Activated T-helper 1 cell treated with anti-CD3 and anti-CD28 coated beads, Interleukin-12 subunit alpha, Interleukin-12 subunit beta, Interleukin-2, Interleukin-4 antibody, amounts not matched to agents 30 ng/mL and 10 ng/mL and 1 ng/mL, durations not matched to agents 14 hours and 24 hours and 36 hours (primary cell): ENCODE measurements at regions of chr20 and their contacts with region 1.

Region 1: DNA sequence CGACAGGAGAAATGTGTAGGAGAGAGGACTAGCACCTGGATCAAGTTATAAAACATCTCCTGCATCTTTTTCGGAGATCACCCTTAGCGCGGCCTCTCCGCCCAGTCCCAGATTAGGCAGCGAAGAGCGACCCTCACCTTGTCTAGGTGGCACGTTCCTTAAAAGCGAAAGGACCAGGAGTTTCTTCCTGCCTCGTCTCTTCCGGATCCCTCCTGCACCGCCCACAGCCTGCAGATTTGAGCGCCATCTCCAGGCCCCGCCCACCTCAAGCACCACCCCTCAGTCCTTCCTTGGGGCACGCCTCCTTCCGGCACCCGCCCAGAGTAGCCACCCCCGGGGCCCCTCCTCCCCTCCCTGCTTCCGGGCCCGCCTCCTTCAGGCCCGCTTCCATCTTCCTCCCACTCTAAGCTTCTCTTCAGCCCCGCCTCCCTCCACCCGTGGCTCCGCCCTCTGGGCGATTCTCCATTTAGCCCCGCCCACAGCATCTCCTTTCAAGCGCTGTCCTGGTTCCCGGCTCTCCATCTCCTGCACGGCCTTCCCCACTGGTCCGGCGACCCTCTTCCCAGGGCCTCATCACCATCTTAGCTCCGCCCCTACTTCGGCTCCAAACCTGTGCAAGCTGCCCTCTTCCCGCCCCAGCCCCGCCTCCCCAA is 662 bp upstream of the RALY start:
- DNase-seq: peak; percentile 99
- H3K4me3 Mint-ChIP-seq: peak overlapping the region; percentile 88
- H3K27ac Mint-ChIP-seq: peak overlapping the region; percentile 97
- H3K4me1 Mint-ChIP-seq: peaks cover 58% of the 10 kb centered on the region
- H3K27me3 Mint-ChIP-seq: peaks cover 2% of the 10 kb centered on the region

Region 2: GRCh38 chr20:32207626-32208498 is 1785.2 kb before region 1 on chr20 and contains the starts of genes PLAGL2 and POFUT1:
- intact Hi-C with region 1: loop called (anchors 10 kb)
- DNase-seq: peak; percentile 90
- H3K4me3 Mint-ChIP-seq: peak within 1 kb of the TSS; percentile 100
- H3K27ac Mint-ChIP-seq: peak within 1 kb of the TSS; percentile 93
- H3K4me1 Mint-ChIP-seq: peaks cover 81% of the 10 kb centered on the region
- H3K27me3 Mint-ChIP-seq: no peaks in the 10 kb centered on the region
- total RNA-seq, gene PLAGL2: 123 and 126 TPM in 2 replicates
- total RNA-seq, gene POFUT1: 69.0 and 73.0 TPM in 2 replicates

Region 3: DNA sequence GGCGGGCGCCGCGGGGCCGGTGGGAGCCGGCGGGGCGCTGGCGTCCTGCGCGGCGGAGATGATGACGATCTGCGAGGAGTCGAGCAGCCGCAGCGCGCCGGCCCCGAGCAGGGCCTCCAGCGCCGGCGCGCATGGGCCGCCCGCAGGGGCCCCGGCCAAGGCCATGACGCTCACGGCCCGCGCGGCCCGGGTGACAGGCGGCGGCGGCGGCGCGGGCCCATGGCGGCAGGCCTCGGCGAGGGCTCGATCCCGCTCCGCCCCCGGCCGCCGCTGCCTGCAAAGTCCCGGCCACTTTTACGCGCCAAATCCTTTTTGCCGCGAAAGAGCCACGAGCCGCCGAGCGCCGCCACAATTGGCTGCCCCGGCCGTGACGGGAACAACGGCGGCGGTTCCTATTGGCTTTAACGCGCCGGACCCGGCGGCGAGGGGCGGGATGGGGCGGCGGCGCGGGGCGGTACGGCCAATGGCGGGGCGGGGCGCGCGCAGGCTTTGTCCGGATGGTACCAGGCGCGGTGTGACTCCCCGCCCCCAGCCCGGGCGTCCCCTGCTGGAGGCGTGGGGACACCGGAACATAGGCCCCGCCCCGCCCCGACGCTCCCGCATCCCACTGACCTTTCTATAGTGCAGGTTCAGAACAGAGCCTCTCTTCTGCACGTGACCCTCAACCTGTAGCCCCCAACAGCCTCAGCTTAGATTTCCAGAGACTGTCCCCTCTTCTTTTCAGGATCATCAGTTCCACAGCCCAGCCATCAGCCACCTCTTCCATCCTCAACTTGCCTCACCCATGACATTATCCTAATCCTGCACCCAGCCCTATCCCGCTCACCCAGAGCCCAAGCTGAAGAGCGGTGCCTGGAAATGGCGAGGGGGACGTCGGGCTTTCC is 306.7 kb before region 1 on chr20 and contains the start of gene E2F1:
- intact Hi-C with region 1: loop called (anchors 5 kb)
- DNase-seq: peak; percentile 97
- H3K4me3 Mint-ChIP-seq: peak within 1 kb of the TSS; percentile 92
- H3K27ac Mint-ChIP-seq: peak within 1 kb of the TSS; percentile 89
- H3K4me1 Mint-ChIP-seq: peaks cover 71% of the 10 kb centered on the region
- H3K27me3 Mint-ChIP-seq: no peaks in the 10 kb centered on the region
- total RNA-seq, gene E2F1: 77.5 and 80.6 TPM in 2 replicates

Region 4: GRCh38 chr20:34037121-34037520 is 44.1 kb after region 1 on chr20:
- intact Hi-C with region 1: loop called (anchors 1 kb)
- DNase-seq: peak; percentile 8
- H3K4me3 Mint-ChIP-seq: peak overlapping the region; percentile 63
- H3K27ac Mint-ChIP-seq: peak overlapping the region; percentile 64
- H3K4me1 Mint-ChIP-seq: peaks cover 27% of the 10 kb centered on the region
- H3K27me3 Mint-ChIP-seq: no peaks in the 10 kb centered on the region

Region 5: DNA sequence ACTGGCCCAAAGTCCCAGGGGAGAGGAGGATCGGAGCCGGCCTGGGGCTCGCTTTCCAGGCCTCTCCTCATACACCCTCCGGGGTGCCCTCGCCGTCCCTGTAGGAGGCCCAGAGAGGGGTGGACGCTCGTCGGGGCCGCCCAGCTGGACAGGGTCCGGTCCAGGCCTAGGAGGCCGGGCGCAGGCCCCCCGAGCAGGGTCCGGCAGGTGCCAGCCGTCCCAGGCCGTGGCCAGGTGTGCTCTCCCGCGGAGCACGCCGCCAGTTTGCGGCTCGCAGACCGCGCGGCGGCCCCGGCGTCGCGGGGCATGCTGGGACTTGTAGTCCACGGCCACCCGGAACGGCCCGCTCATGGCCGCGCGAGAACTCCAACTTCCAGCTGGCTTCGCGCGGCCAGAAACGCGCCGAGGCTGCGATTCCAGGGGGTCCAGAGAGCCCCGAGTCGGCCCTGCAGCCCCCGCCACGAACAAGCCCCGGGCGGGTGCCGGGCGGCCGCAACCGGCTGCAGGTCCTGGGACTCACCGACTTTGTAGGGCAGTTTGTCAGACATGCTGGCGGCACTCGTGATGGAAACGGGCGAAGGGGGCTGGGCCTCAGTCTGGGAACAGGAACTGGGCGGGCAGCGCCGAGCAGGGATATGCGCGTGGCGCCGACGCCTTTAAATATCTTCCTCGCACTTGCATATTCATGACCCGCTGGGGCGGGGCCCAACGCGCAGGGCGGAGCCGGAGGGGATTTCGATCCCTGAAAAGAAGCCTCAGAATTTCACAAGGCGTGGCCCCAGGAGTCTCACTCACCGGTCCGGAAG is 309.9 kb after region 1 on chr20 and contains the start of gene AHCY:
- intact Hi-C with region 1: loop called (anchors 1 kb)
- DNase-seq: peak; percentile 93
- H3K4me3 Mint-ChIP-seq: peak within 1 kb of the TSS; percentile 83
- H3K27ac Mint-ChIP-seq: peak within 1 kb of the TSS; percentile 92
- H3K4me1 Mint-ChIP-seq: peaks cover 19% of the 10 kb centered on the region
- H3K27me3 Mint-ChIP-seq: no peaks in the 10 kb centered on the region
- total RNA-seq, gene AHCY: 130 and 132 TPM in 2 replicates

Region 6: GRCh38 chr20:34704177-34705007 is 711.3 kb after region 1 on chr20 and contains the start of gene TP53INP2:
- intact Hi-C with region 1: loop called (anchors 10 kb)
- DNase-seq: peak; percentile 86
- H3K4me3 Mint-ChIP-seq: peak within 1 kb of the TSS; percentile 94
- H3K27ac Mint-ChIP-seq: peak within 1 kb of the TSS; percentile 89
- H3K4me1 Mint-ChIP-seq: peaks cover 52% of the 10 kb centered on the region
- H3K27me3 Mint-ChIP-seq: peaks cover 21% of the 10 kb centered on the region
- total RNA-seq, gene TP53INP2: 3.2 and 3.5 TPM in 2 replicates

Region 7: GRCh38 chr20:35541783-35542588 is 1548.9 kb after region 1 on chr20 and contains the start of gene ERGIC3:
- intact Hi-C with region 1: loop called (anchors 5 kb)
- DNase-seq: peak; percentile 96
- H3K4me3 Mint-ChIP-seq: peak within 1 kb of the TSS; percentile 90
- H3K27ac Mint-ChIP-seq: peak within 1 kb of the TSS; percentile 88
- H3K4me1 Mint-ChIP-seq: peaks cover 12% of the 10 kb centered on the region
- H3K27me3 Mint-ChIP-seq: no peaks in the 10 kb centered on the region
- total RNA-seq, gene ERGIC3: 132 and 137 TPM in 2 replicates